ENCODE measurements at regions of chr9 and their contacts with region 1.

Region 1: DNA sequence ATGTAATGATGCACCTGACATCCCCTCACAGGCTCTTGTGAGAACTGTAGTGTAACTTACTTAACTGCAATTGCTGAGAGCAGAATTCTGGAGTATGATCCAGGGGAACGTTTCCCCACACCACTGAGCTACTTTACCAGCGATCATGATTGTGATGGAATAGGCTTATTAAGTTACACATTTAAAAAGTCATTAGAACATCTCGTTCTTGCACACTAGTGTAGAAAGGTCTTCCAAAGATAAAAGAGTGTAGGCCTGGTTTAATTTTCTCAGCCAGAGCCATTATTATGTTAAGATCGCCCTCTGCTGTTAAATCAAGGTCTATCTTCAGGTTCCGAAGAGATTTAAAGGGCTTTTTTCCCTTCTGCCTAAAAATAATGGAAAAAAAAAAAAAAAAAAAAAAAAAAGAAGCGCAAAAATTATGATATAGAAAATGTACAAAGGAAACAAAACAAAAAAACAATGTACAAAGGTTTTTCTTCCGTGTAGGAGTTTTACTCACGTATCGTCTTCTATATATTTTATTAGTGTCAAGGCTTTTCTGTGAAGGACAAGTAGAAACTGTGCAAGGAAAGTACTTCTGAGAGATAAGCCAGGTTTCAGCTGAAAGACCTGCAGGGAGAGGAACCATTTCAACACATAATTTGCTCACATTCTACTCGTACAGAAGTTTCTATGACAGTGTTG is 18.6 kb upstream of the MOB3B start:
- DNase-seq: no peak
- H3K4me3 ChIP-seq: no peak overlapping the region
- H3K27ac ChIP-seq: peak overlapping the region in 3 of 4 donors; percentile 29 to 63 (median 44)
- H3K4me1 ChIP-seq: peaks cover 0 to 12% (median 11%) of the 10 kb centered on the region in 4 donors
- H3K27me3 ChIP-seq: no peaks in the 10 kb centered on the region
- CTCF ChIP-seq: peak; percentile 46 to 58 (median 51)
- EP300 ChIP-seq: no peak
- POLR2A ChIP-seq: no peak

Region 2: GRCh38 chr9:26561928-26562327 is 986.3 kb before region 1 on chr9:
- intact Hi-C with region 1: no loop called
- DNase-seq: no peak
- H3K4me3 ChIP-seq: no peak overlapping the region
- H3K27ac ChIP-seq: no peak overlapping the region
- H3K4me1 ChIP-seq: no peaks in the 10 kb centered on the region
- H3K27me3 ChIP-seq: no peaks in the 10 kb centered on the region
- CTCF ChIP-seq: no peak
- EP300 ChIP-seq: no peak
- POLR2A ChIP-seq: no peak

Region 3: DNA sequence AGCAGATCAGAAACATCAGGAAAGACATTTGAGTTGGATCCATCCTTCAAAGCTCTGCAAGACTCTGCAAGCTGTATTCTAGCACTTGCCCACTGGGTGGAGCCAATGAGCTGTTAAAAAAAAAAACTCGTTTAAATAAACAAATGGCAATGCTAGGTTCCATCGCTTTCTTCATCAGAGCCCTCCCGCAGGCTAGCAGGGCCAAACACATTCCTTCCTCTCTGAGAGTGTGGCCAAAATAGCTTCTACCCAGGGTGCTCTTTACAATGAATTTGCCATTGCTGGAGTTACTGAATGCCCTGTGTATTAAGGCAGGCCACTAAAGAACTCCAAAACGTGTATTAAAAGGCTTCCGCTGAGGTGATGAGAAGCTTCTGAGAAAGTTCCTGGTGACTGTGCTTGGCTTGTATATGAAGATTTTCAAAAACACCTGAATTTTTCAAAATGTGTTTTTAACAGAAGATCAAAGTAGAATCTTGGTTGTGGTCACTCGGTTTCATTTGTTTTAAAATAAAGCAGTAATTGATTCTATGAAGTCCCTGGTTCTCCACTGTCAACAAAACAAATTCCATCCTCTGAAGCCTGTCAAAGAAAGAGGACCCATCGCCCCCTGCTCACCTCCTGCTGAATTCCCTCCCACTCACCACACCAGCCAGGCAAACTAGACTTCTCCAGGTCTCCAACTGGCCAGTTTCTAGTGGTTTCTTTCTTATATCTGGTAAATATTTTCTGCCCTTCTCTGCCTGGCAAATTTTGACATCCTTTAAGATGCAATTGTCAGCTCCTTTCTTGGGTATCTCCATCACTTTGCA is 214.8 kb before region 1 on chr9:
- intact Hi-C with region 1: loop called (anchors 1 kb)
- DNase-seq: no peak
- H3K4me3 ChIP-seq: no peak overlapping the region
- H3K27ac ChIP-seq: no peak overlapping the region
- H3K4me1 ChIP-seq: peaks cover 11 to 24% (median 18%) of the 10 kb centered on the region in 4 donors
- H3K27me3 ChIP-seq: no peaks in the 10 kb centered on the region
- CTCF ChIP-seq: peak; percentile 92 to 95 (median 94)
- EP300 ChIP-seq: no peak
- POLR2A ChIP-seq: no peak

Measured in esophagus muscularis mucosa (tissue), 4 donors.